Body of pancreas (tissue), 4 donors: ENCODE measurements at regions of chr2 and their contacts with region 1.

Region 1: DNA sequence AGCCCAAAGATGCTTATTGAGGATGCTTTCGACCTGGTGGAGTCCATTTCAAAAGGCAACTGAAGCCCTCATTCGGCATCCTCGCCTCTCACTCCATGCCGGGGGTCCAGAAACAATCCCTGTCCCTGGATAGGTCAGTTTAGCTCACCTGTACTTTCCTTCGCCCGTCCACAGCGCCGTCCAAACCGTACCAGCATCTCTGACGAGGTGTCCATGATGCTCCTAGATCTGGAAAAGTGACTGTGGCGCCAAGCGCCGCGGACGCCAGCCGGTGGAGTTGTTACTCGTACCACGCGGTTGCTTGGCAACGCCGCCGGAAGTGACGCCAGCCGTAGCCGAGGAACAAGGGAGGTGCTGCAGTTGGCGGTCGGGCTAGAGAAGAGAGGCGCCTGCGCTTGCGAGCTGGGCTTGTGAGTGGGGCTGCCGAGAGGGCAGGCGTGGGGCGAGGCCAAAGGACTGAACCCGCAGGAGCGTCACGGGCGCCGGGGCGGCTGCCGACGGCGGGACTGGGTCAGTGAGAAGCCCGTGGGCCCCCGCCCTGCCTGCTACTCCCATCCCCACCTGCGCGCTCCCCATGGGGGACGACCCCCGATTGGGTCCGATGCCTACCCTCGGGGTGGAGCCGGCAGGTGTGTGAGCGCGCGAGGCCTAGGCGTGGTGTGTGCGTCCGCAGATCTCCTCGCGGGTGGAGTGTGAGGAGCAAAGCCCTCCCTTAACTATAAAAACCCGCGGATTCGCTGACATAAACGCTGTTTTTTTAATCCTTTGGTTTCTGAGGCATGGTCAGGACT is at the starts of genes CFAP210 and PHOSPHO2:
- DNase-seq: peak; percentile 99 to 100 (median 100)
- ATAC-seq: peak; percentile 100
- H3K4me3 ChIP-seq: peak within 1 kb of the TSS; percentile 15 to 84
- H3K27ac ChIP-seq: peak within 1 kb of the TSS; percentile 68 to 93 (median 80)
- H3K4me1 ChIP-seq: peaks cover 19% of the 10 kb centered on the region
- H3K27me3 ChIP-seq: no peaks in the 10 kb centered on the region
- CTCF ChIP-seq: no peak
- POLR2A ChIP-seq: peak; percentile 73 to 93 (median 89)
- total RNA-seq, gene CFAP210: not detected
- total RNA-seq, gene PHOSPHO2: 0.66 to 6.7 TPM

Region 2: DNA sequence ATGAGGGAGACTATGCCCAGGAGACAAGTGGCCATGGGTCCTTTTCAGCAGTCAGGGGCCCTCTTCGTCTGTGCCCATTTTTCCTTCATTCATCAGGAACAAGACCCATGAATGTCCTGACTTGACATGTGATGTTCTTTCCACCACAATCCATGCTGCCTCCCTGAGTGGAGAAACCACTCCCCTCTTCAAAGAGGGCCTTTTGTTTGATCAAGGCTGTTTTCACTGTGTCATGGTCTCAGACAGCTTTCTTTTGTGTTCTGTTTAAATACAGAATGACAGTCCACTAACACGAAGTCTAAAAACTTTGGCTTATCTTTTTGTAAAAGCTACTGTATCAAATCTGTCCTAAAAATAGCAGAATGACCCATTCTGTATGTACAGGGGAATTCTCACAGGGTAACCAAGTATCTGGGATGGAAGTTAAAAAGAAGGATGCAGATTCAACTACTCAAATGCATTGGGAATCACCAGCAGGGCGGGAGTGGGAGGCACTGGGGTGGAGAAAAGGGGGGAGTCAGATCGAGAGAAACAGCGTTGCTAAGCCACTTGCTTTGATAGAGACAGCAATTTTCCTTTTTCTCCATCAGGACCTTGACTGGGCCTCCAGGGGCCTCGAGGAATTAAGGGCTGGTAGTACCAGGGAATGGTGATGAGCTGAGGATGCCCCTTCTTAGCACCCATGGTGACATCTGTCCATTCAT is 345.8 kb before region 1 on chr2:
- intact Hi-C with region 1: no loop called
- DNase-seq: no peak
- ATAC-seq: no peak
- H3K4me3 ChIP-seq: no peak overlapping the region
- H3K27ac ChIP-seq: no peak overlapping the region
- H3K4me1 ChIP-seq: no peaks in the 10 kb centered on the region
- H3K27me3 ChIP-seq: no peaks in the 10 kb centered on the region
- CTCF ChIP-seq: no peak
- POLR2A ChIP-seq: no peak

Region 3: DNA sequence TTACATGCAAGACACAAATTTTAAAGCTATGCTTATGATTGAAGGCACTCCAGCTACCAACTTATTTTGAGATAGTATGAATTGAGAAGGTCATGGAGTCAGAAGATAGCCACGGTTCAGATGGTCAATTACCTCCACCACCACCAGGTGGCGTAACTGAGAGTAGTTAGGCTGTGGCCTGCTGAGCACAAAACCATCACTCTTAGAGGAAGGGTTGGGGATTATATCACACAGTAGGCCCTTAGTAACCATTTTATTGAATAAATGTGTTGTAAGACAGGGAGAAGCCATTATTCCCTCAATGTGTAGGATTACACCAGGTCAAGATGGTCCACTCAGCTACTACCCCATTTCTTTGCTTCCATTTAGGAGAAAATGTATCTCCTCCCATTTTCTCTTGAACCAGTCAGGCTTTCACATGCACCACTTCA is 166.0 kb before region 1 on chr2:
- intact Hi-C with region 1: no loop called
- DNase-seq: peak; percentile 67 to 82 (median 74)
- ATAC-seq: peak; percentile 74
- H3K4me3 ChIP-seq: no peak overlapping the region
- H3K27ac ChIP-seq: no peak overlapping the region
- H3K4me1 ChIP-seq: no peaks in the 10 kb centered on the region
- H3K27me3 ChIP-seq: no peaks in the 10 kb centered on the region
- CTCF ChIP-seq: peak; percentile 53 to 78 (median 68)
- POLR2A ChIP-seq: no peak

Region 4: GRCh38 chr2:169573160-169573973 is 120.9 kb before region 1 on chr2 and contains the start of gene FASTKD1:
- intact Hi-C with region 1: no loop called
- DNase-seq: peak; percentile 89 to 94 (median 92)
- ATAC-seq: peak; percentile 100
- H3K4me3 ChIP-seq: peak within 1 kb of the TSS; percentile 76 to 91
- H3K27ac ChIP-seq: peak within 1 kb of the TSS; percentile 7 to 83 (median 58)
- H3K4me1 ChIP-seq: peaks cover 11% of the 10 kb centered on the region
- H3K27me3 ChIP-seq: no peaks in the 10 kb centered on the region
- CTCF ChIP-seq: no peak
- POLR2A ChIP-seq: peak in 2 of 3 donors; percentile 45
- total RNA-seq, gene FASTKD1: 13.2 to 18.2 TPM

Region 5: GRCh38 chr2:169775765-169776164 is 81.5 kb after region 1 on chr2:
- intact Hi-C with region 1: loop called (anchors 10 kb)
- DNase-seq: no peak
- ATAC-seq: no peak
- H3K4me3 ChIP-seq: no peak overlapping the region
- H3K27ac ChIP-seq: no peak overlapping the region
- H3K4me1 ChIP-seq: no peaks in the 10 kb centered on the region
- H3K27me3 ChIP-seq: no peaks in the 10 kb centered on the region
- CTCF ChIP-seq: no peak
- POLR2A ChIP-seq: no peak